Activated CD8-positive, alpha-beta T cell treated with anti-CD3 and anti-CD28 coated beads, Interleukin-2, amount 10 ng/mL, durations not matched to agents 7 days and 5 days (primary cell): ENCODE measurements at regions of chr7 and their contacts with region 1.

Region 1: GRCh38 chr7:148575640-148576411 is 14.7 kb upstream of the C7orf33 start:
- DNase-seq: peak; percentile 80
- ATAC-seq: peak; percentile 90
- H3K4me3 Mint-ChIP-seq: no peak overlapping the region
- H3K27ac Mint-ChIP-seq: peak overlapping the region; percentile 52
- H3K4me1 Mint-ChIP-seq: peaks cover 14% of the 10 kb centered on the region
- H3K27me3 Mint-ChIP-seq: peaks cover 13% of the 10 kb centered on the region

Region 2: GRCh38 chr7:148385009-148385682 is 190.7 kb before region 1 on chr7:
- CTCF ChIA-PET with region 1: no interaction called
- POLR2A ChIA-PET with region 1: no interaction called
- DNase-seq: no peak
- ATAC-seq: no peak
- H3K4me3 Mint-ChIP-seq: no peak overlapping the region
- H3K27ac Mint-ChIP-seq: no peak overlapping the region
- H3K4me1 Mint-ChIP-seq: no peaks in the 10 kb centered on the region
- H3K27me3 Mint-ChIP-seq: no peaks in the 10 kb centered on the region

Region 3: DNA sequence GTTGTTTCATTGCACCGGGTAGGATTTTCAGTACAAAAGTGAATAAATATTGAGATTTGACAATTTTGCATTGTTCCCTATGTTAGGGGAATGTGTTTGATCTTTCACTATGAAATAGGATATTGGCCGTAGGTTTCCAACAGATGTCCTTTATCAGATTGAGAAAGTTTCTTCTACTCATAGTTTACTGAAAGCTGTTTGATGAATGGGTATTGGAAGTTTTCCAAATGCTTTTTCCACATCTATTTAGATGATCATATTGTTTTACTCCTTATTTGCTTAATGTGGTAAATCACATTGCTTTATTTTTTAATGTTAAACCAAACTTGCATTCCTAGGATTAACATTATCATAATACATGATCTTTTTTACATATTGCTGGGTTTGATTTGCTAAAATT is 163.1 kb before region 1 on chr7:
- CTCF ChIA-PET with region 1: no interaction called
- POLR2A ChIA-PET with region 1: no interaction called
- DNase-seq: no peak
- ATAC-seq: no peak
- H3K4me3 Mint-ChIP-seq: no peak overlapping the region
- H3K27ac Mint-ChIP-seq: no peak overlapping the region
- H3K4me1 Mint-ChIP-seq: no peaks in the 10 kb centered on the region
- H3K27me3 Mint-ChIP-seq: peaks cover 6% of the 10 kb centered on the region

Region 4: GRCh38 chr7:148563583-148564274 is 12.1 kb before region 1 on chr7:
- CTCF ChIA-PET with region 1: interaction called, 56 read pairs
- POLR2A ChIA-PET with region 1: no interaction called
- DNase-seq: no peak
- ATAC-seq: peak; percentile 12
- H3K4me3 Mint-ChIP-seq: peak overlapping the region; percentile 51
- H3K27ac Mint-ChIP-seq: peak overlapping the region; percentile 86
- H3K4me1 Mint-ChIP-seq: peaks cover 26% of the 10 kb centered on the region
- H3K27me3 Mint-ChIP-seq: peaks cover 15% of the 10 kb centered on the region

Region 5: DNA sequence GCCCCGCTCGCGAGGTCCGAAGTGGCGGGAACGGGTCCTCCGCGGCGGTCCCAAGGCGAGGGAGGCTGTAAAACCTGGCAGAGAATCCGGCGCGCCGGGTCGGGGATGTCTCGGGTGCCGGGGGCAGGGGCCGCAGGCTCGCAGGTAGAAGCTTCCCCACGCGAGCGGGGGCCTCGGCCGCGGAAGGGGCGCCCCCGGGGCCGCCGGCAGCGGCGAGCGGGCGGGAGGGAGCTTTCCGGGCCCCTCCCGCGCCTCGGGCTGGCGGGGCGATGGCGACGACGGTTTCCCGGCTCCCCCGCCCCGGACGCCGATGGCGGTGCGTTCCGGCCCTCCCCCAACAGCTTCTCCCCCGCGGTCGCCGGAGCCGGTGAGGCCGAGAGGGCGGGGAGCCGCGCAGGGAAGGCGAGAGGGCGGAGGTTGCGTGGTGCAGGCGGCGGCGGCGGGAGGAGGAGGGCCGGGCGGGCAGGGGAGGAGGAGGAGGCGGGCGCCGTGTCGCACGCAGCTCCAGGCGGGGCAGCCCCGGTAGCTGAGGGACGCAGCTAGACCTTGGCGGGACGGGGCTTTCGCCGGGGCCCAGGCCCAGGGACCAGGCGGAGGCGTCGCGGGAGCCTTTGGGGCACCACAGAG is 122.7 kb after region 1 on chr7 and contains the start of gene CUL1:
- CTCF ChIA-PET with region 1: interaction called, 13 read pairs
- POLR2A ChIA-PET with region 1: no interaction called
- DNase-seq: peak; percentile 85
- ATAC-seq: peak; percentile 87
- H3K4me3 Mint-ChIP-seq: peak within 1 kb of the TSS; percentile 90
- H3K27ac Mint-ChIP-seq: peak within 1 kb of the TSS; percentile 90
- H3K4me1 Mint-ChIP-seq: peaks cover 52% of the 10 kb centered on the region
- H3K27me3 Mint-ChIP-seq: peaks cover 11% of the 10 kb centered on the region
- total RNA-seq, gene CUL1: 55.8 to 57.6 TPM

Region 6: DNA sequence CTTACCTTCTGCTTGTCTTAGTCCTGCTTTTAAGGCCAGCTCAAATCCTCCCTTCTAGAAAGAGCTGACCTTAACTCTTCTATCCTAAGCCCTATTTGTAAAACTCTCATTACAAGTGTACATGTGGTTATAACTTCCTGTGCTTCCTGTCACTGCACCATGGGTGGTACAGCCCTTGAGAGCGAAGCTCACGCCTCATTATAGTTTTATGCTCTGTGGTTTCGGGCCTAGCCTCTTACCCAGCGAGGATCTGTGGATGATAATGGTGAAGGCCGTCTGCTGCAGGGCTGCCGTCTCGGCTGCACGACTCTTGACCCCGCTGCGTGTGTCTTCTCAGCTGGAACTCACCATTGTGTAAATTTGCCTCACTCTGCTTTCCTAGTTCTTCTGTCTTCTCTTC is 197.5 kb after region 1 on chr7:
- CTCF ChIA-PET with region 1: interaction called, 15 read pairs
- POLR2A ChIA-PET with region 1: no interaction called
- DNase-seq: peak; percentile 78
- ATAC-seq: peak; percentile 98
- H3K4me3 Mint-ChIP-seq: peak overlapping the region; percentile 17
- H3K27ac Mint-ChIP-seq: peak overlapping the region; percentile 86
- H3K4me1 Mint-ChIP-seq: peaks cover 27% of the 10 kb centered on the region
- H3K27me3 Mint-ChIP-seq: no peaks in the 10 kb centered on the region

Region 7: DNA sequence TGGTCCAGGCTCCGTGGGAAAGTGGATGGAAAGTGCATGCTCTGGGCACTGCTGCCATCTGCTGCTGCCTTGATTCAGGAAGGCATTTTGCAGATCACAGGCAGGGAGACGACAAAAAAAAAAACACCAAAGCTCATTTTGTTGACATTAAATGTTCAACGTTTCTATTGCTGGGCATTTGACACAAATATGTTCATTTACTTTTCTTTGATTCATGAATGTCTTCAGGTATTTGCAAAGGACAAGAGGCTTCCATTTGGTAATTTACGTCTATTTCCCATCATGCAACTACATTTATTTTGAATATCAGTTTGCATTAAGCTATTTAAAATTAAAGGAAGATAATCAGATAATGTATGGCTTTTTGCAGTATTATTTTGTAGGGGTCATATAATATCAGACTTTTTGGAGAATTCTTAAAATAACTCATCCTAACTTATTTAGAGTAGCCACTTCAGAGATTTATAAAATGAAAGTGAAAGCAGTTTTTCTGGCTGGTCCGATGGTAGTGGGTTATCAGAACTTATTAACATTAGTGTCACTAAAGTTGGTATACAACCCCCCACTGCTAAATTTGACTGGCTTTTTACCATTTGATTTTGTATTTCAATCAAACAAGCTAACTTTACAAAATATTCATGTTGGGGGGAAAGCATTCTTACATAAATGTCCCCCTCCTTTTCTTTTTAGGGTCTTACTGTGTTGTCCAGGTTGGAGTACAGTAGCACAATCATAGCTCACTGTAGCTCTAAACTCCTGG is 387.2 kb after region 1 on chr7:
- CTCF ChIA-PET with region 1: interaction called, 26 read pairs
- POLR2A ChIA-PET with region 1: no interaction called
- DNase-seq: peak; percentile 76
- ATAC-seq: peak; percentile 78
- H3K4me3 Mint-ChIP-seq: peak overlapping the region; percentile 90
- H3K27ac Mint-ChIP-seq: peak overlapping the region; percentile 85
- H3K4me1 Mint-ChIP-seq: peaks cover 33% of the 10 kb centered on the region
- H3K27me3 Mint-ChIP-seq: peaks cover 5% of the 10 kb centered on the region